Mammary epithelial cell (primary cell): ENCODE measurements at regions of chr2 and their contacts with region 1.

Region 1: DNA sequence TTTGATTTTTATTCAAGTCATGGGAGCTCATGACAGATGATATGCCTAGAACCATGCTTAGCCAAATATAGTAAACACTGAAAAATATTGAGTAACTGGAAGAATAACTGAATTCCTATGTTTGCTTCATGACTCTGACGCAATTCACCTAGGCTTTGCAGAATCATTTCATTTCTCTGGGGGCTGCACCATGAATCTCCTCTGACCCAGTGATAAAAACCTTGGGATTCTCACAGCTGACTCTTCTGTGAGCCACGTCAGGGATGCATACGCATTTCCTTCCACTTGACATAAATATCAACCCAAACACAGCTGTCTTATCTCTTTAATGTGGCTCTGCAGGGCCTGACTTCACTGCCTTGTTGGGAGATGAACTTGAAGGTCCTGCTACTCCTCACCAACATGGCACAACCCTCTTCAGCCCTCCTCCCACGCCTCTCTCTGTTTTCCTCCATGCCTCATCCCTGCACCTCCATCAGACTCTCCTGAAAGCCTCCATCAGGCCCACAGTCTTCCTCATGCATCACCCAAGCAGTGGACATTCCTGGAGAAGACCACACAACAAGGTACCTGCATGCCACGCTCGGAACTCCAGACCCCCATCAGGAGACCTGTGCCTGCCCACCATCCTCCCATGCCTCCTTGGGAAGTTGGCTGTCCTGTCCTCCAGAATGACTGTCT is 29.8 kb downstream of the COL6A3 start:
- DNase-seq: no peak
- H3K4me3 ChIP-seq: no peak overlapping the region
- H3K27ac ChIP-seq: no peak overlapping the region
- H3K4me1 ChIP-seq: no peaks in the 10 kb centered on the region
- H3K27me3 ChIP-seq: peaks cover 3% of the 10 kb centered on the region
- CTCF ChIP-seq: no peak

Region 2: GRCh38 chr2:237012577-237013267 is 371.4 kb before region 1 on chr2:
- CTCF ChIA-PET with region 1: no interaction called
- dilution Hi-C with region 1: no loop called
- in situ Hi-C with region 1: no loop called
- intact Hi-C with region 1: no loop called
- DNase-seq: no peak
- H3K4me3 ChIP-seq: no peak overlapping the region
- H3K27ac ChIP-seq: no peak overlapping the region
- H3K4me1 ChIP-seq: no peaks in the 10 kb centered on the region
- H3K27me3 ChIP-seq: no peaks in the 10 kb centered on the region
- CTCF ChIP-seq: no peak

Region 3: GRCh38 chr2:237310515-237311114 is 73.5 kb before region 1 on chr2:
- CTCF ChIA-PET with region 1: no interaction called
- dilution Hi-C with region 1: loop called (anchors 5 kb)
- in situ Hi-C with region 1: no loop called
- intact Hi-C with region 1: no loop called
- DNase-seq: no peak
- H3K4me3 ChIP-seq: no peak overlapping the region
- H3K27ac ChIP-seq: no peak overlapping the region
- H3K4me1 ChIP-seq: peaks cover 2% of the 10 kb centered on the region
- H3K27me3 ChIP-seq: no peaks in the 10 kb centered on the region
- CTCF ChIP-seq: no peak

Region 4: GRCh38 chr2:237744613-237745249 is 360.6 kb after region 1 on chr2:
- CTCF ChIA-PET with region 1: no interaction called
- dilution Hi-C with region 1: no loop called
- in situ Hi-C with region 1: no loop called
- intact Hi-C with region 1: no loop called
- DNase-seq: peak; percentile 32
- H3K4me3 ChIP-seq: no peak overlapping the region
- H3K27ac ChIP-seq: no peak overlapping the region
- H3K4me1 ChIP-seq: no peaks in the 10 kb centered on the region
- H3K27me3 ChIP-seq: no peaks in the 10 kb centered on the region
- CTCF ChIP-seq: peak; percentile 94 to 98